CD4-positive, alpha-beta memory T cell (primary cell): ENCODE measurements at regions of chr7 and their contacts with region 1.

Region 1: DNA sequence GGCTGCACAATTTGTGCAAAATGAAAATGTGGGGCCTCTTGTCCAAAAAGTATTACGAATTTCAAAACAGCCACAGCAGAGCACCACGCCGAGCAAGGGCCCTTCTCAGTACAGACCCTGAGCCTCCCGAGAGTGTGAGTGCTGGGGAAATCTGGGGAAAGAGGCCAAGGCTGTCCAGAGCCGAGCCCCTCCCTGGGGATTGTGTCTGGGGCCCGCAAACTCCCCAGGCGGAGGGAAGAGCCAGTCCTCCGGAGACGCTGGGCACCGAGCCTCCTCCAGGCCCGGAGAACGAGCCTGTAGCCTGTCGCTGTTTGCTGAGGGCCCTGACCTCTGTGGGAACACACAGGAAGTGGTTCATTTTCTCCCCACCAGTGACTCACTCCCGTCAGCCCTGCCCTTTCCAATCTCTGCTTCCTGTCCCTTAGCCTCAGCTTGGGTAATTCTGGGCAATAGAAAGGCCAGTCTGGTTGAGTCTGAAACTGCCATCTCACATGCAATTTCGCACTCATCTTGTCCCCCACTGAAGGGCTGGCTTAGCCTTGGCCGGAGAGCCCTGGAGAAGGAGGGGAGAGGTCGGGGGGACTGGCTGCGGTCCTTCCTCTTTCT is 19.5 kb upstream of the GNA12 start:
- DNase-seq: peak; percentile 57 to 79 (median 64)
- H3K4me3 ChIP-seq: peak overlapping the region in 1 of 2 donors; percentile 42
- H3K4me3 Mint-ChIP-seq: peak overlapping the region; percentile 64 to 88 (median 78)
- H3K27ac ChIP-seq: peak overlapping the region; percentile 54
- H3K27ac Mint-ChIP-seq: peak overlapping the region; percentile 56 to 97 (median 94)
- H3K4me1 ChIP-seq: peaks cover 28% of the 10 kb centered on the region
- H3K4me1 Mint-ChIP-seq: peaks cover 15 to 28% (median 24%) of the 10 kb centered on the region in 4 donors
- H3K27me3 ChIP-seq: no peaks in the 10 kb centered on the region
- H3K27me3 Mint-ChIP-seq: no peaks in the 10 kb centered on the region

Region 2: GRCh38 chr7:2471396-2471795 is 392.2 kb before region 1 on chr7:
- CTCF ChIA-PET with region 1: no interaction called
- POLR2A ChIA-PET with region 1: no interaction called
- intact Hi-C with region 1: no loop called
- DNase-seq: no peak
- H3K4me3 ChIP-seq: no peak overlapping the region
- H3K4me3 Mint-ChIP-seq: no peak overlapping the region
- H3K27ac ChIP-seq: no peak overlapping the region
- H3K27ac Mint-ChIP-seq: no peak overlapping the region
- H3K4me1 ChIP-seq: no peaks in the 10 kb centered on the region
- H3K4me1 Mint-ChIP-seq: peaks cover 2 to 5% (median 4%) of the 10 kb centered on the region in 4 donors
- H3K27me3 ChIP-seq: no peaks in the 10 kb centered on the region
- H3K27me3 Mint-ChIP-seq: peaks cover 2 to 5% of the 10 kb centered on the region in 2 donors

Region 3: GRCh38 chr7:2497500-2498336 is 365.8 kb before region 1 on chr7:
- CTCF ChIA-PET with region 1: no interaction called
- POLR2A ChIA-PET with region 1: no interaction called
- intact Hi-C with region 1: no loop called
- DNase-seq: peak in 1 of 5 donors; percentile 16
- H3K4me3 ChIP-seq: no peak overlapping the region
- H3K4me3 Mint-ChIP-seq: no peak overlapping the region
- H3K27ac ChIP-seq: no peak overlapping the region
- H3K27ac Mint-ChIP-seq: no peak overlapping the region
- H3K4me1 ChIP-seq: no peaks in the 10 kb centered on the region
- H3K4me1 Mint-ChIP-seq: peaks cover 0 to 1% (median 0%) of the 10 kb centered on the region in 4 donors
- H3K27me3 ChIP-seq: no peaks in the 10 kb centered on the region
- H3K27me3 Mint-ChIP-seq: peaks cover 0 to 3% of the 10 kb centered on the region in 2 donors

Region 4: DNA sequence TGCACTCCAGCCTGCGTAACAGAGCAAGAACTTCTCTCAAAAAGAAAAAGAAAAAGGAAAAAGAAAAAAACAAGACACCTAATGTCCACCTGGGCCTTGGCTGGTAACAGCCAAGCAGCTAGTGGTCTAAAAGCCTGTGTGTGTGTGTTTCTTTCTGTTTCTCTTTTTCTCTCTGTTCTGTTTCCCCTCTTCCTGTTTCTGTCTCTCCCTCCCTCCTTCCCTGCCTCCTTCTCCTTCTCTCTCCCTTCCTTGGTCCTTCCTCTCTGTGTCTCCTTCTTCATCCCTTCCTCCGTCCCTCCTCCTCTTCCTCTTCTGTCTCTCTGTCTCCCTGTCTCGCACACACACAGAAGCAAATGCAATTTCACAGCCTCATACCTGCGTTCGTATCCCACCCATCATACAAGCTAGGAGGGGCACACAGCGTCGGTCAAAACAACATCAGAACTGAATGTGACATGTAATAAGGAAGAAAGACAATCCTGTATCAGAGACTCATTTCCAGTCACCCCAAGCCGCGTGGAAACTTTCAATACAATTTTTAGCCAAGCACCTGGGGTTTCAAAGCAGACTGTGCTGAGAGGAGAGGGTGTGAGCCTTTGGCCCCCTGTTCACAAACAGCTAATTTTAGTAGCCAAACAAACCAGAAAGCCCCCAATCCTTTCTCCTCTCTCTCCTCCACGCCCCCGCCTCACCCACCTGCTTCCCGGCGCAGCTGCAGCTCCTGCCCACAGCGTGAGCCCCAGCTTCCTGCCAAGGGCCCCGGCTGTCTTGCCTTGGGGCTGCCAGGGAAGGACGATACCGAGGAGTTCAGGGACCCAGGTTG is 30.8 kb after region 1 on chr7:
- CTCF ChIA-PET with region 1: interaction called, 10 read pairs
- POLR2A ChIA-PET with region 1: no interaction called
- intact Hi-C with region 1: no loop called
- DNase-seq: peak in 4 of 5 donors; percentile 29 to 41 (median 34)
- H3K4me3 ChIP-seq: peak overlapping the region; percentile 32 to 39
- H3K4me3 Mint-ChIP-seq: peak overlapping the region; percentile 69 to 90 (median 84)
- H3K27ac ChIP-seq: no peak overlapping the region
- H3K27ac Mint-ChIP-seq: peak overlapping the region in 5 of 7 donors; percentile 54 to 94 (median 82)
- H3K4me1 ChIP-seq: peaks cover 15% of the 10 kb centered on the region
- H3K4me1 Mint-ChIP-seq: peaks cover 10 to 24% (median 13%) of the 10 kb centered on the region in 4 donors
- H3K27me3 ChIP-seq: no peaks in the 10 kb centered on the region
- H3K27me3 Mint-ChIP-seq: no peaks in the 10 kb centered on the region

Region 5: DNA sequence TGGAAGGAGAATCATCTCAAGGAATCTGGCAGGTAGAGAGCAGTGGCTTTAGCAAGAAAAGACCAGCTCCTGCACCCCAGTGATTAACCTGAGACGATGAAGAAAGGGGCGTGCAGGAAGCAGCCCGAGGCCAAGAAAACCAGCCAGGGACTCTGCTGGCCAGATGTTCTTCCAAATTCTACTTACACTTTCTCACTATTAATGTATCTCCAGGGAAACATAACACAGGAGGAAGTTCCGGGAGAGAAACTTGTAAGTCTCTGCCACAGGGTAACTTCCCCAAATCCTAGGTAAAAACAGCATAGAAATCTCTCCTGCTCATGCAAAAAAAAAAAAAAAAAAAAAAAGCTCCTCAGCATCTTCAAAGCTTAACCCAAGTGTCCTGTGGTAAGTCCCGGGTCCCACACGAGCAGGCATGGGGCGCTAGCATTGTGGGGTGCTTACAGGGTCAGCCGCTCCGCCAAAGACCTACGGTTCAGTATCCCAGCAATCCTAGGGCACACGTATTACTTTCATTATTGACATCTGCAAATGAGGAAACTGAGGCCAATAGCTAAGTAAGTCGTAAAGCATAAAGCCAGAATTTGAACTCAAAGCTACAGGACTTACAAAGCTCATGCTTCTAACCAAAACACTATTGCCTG is 77.8 kb after region 1 on chr7:
- CTCF ChIA-PET with region 1: no interaction called
- POLR2A ChIA-PET with region 1: no interaction called
- intact Hi-C with region 1: no loop called
- DNase-seq: no peak
- H3K4me3 ChIP-seq: no peak overlapping the region
- H3K4me3 Mint-ChIP-seq: peak overlapping the region in 1 of 8 donors; percentile 26
- H3K27ac ChIP-seq: no peak overlapping the region
- H3K27ac Mint-ChIP-seq: peak overlapping the region in 4 of 7 donors; percentile 8 to 50 (median 22)
- H3K4me1 ChIP-seq: no peaks in the 10 kb centered on the region
- H3K4me1 Mint-ChIP-seq: peaks cover 0 to 7% (median 4%) of the 10 kb centered on the region in 4 donors
- H3K27me3 ChIP-seq: no peaks in the 10 kb centered on the region
- H3K27me3 Mint-ChIP-seq: no peaks in the 10 kb centered on the region

Region 6: GRCh38 chr7:2980401-2981102 is 117.0 kb after region 1 on chr7:
- CTCF ChIA-PET with region 1: no interaction called
- POLR2A ChIA-PET with region 1: interaction called, 4 read pairs
- intact Hi-C with region 1: loop called (anchors 5 kb)
- DNase-seq: no peak
- H3K4me3 ChIP-seq: no peak overlapping the region
- H3K4me3 Mint-ChIP-seq: peak overlapping the region in 2 of 8 donors; percentile 41 to 46
- H3K27ac ChIP-seq: no peak overlapping the region
- H3K27ac Mint-ChIP-seq: peak overlapping the region in 4 of 7 donors; percentile 22 to 84 (median 40)
- H3K4me1 ChIP-seq: peaks cover 66% of the 10 kb centered on the region
- H3K4me1 Mint-ChIP-seq: peaks cover 47 to 84% (median 66%) of the 10 kb centered on the region in 4 donors
- H3K27me3 ChIP-seq: no peaks in the 10 kb centered on the region
- H3K27me3 Mint-ChIP-seq: no peaks in the 10 kb centered on the region

Region 7: DNA sequence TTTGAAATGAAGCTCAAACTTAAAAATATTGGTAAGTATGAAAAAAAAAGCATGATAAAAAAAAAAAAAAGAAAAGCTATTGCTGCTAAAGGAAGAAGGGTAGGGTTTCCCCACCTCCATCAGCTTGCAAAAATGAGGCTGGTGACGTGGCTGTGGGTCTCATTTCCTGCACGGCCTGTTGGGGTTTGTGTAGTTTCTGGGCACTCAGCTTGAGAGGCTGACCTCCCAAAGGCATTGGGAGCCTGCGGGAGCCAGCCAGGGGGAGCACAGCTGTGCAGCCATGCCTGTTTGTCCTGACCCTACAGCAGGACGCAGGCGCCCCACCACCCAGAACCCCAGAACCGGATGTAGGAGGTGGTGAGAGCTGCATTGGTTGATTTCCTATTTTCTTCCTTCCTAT is 228.9 kb after region 1 on chr7:
- CTCF ChIA-PET with region 1: interaction called, 15 read pairs
- POLR2A ChIA-PET with region 1: no interaction called
- intact Hi-C with region 1: no loop called
- DNase-seq: peak; percentile 78 to 91 (median 82)
- H3K4me3 ChIP-seq: no peak overlapping the region
- H3K4me3 Mint-ChIP-seq: peak overlapping the region; percentile 38 to 80 (median 71)
- H3K27ac ChIP-seq: peak overlapping the region; percentile 70
- H3K27ac Mint-ChIP-seq: peak overlapping the region; percentile 92 to 97 (median 95)
- H3K4me1 ChIP-seq: peaks cover 79% of the 10 kb centered on the region
- H3K4me1 Mint-ChIP-seq: peaks cover 47 to 86% (median 66%) of the 10 kb centered on the region in 4 donors
- H3K27me3 ChIP-seq: no peaks in the 10 kb centered on the region
- H3K27me3 Mint-ChIP-seq: no peaks in the 10 kb centered on the region

Region 8: GRCh38 chr7:3300651-3301378 is 437.3 kb after region 1 on chr7 and contains the start of gene SDK1:
- CTCF ChIA-PET with region 1: no interaction called
- POLR2A ChIA-PET with region 1: no interaction called
- intact Hi-C with region 1: loop called (anchors 10 kb)
- DNase-seq: peak; percentile 84 to 93 (median 91)
- H3K4me3 ChIP-seq: peak within 1 kb of the TSS; percentile 28 to 39
- H3K4me3 Mint-ChIP-seq: peak within 1 kb of the TSS; percentile 84 to 94 (median 87)
- H3K27ac ChIP-seq: no peak within 1 kb of the TSS
- H3K27ac Mint-ChIP-seq: peak within 1 kb of the TSS in 2 of 7 donors; percentile 53 to 92
- H3K4me1 ChIP-seq: peaks cover 18% of the 10 kb centered on the region
- H3K4me1 Mint-ChIP-seq: peaks cover 8 to 11% (median 9%) of the 10 kb centered on the region in 4 donors
- H3K27me3 ChIP-seq: peaks cover 4% of the 10 kb centered on the region
- H3K27me3 Mint-ChIP-seq: peaks cover 6 to 15% of the 10 kb centered on the region in 2 donors
- total RNA-seq, gene SDK1: 0.06 to 0.26 TPM

Region 9: GRCh38 chr7:3892686-3893085 is 1029.1 kb after region 1 on chr7:
- CTCF ChIA-PET with region 1: interaction called, 14 read pairs
- POLR2A ChIA-PET with region 1: no interaction called
- intact Hi-C with region 1: no loop called
- DNase-seq: no peak
- H3K4me3 ChIP-seq: no peak overlapping the region
- H3K4me3 Mint-ChIP-seq: no peak overlapping the region
- H3K27ac ChIP-seq: no peak overlapping the region
- H3K27ac Mint-ChIP-seq: peak overlapping the region in 1 of 7 donors; percentile 69
- H3K4me1 ChIP-seq: no peaks in the 10 kb centered on the region
- H3K4me1 Mint-ChIP-seq: no peaks in the 10 kb centered on the region
- H3K27me3 ChIP-seq: no peaks in the 10 kb centered on the region
- H3K27me3 Mint-ChIP-seq: peaks cover 2% of the 10 kb centered on the region in 2 donors